GM18951 (cell line): ENCODE measurements at regions of chr2 and their contacts with region 1.

Region 1: DNA sequence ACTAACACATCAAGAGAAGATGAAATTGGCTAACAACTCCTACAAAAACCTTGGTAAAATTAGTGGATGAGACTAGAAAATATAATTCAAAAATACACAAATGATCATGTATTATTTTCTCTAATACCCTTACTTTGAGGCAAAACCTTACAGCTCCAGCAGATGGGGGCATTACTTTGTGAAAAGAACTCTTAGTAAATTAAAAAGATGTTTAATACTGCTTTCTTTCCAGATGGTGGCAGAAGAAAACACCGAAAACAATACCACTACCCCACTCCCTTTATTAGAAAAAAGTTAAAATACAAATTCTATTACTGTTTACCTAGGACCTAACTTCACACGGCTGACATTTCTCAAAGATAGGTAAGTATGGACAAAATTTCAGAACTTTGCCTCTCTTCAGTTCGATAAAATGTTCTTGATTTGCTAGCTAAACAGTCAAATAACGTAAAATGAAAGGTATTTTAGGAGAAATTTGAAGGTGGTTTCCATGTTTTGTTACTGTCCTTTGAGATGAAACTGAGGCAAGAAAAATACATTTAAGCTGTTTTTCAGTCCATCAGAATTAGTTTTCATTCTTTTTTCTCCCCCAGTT is 30.6 kb downstream of the ORC4 start:
- POLR2A ChIP-seq: no peak

Region 2: DNA sequence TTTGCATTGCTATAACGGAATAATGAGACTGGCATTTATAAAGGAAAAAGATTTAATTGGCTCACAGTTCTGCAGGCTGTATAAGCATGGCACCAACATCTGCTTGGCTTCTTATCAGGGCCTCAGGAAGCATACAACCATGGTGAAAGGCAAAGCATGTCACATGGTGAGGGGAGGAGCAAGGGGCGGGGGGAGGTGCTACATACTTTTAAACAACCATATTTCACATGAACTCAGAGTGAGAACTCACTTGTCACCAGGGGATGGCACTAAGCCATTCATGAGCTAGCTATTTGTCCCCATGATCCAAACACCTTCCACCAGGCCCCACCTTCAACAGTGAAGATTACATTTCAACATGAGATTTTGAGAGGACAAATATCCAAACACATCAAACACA is 219.7 kb after region 1 on chr2:
- in situ Hi-C with region 1: no loop called
- POLR2A ChIP-seq: no peak

Region 3: GRCh38 chr2:148519013-148519412 is 529.1 kb after region 1 on chr2:
- in situ Hi-C with region 1: loop called (anchors 10 kb)
- POLR2A ChIP-seq: no peak

Region 4: DNA sequence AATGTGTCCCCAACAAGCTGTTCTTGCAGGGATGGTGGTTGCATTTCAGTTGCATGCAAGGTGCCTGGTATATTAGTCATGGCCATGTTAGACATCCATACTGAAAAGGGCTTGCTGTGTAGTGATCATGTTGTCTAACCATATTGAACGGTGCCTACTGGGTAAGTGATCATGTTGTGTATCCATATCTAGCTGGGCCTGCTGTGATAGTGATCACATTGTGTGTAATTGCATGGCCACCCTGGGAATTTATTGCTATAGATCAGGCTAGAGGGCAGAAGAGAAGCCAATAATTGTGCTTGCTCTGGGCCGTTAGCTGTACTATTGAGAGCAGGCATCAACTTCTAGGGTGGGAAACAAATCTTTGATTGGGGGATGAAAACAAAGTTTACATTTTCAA is 644.8 kb after region 1 on chr2:
- in situ Hi-C with region 1: loop called (anchors 10 kb)
- POLR2A ChIP-seq: no peak

Region 5: GRCh38 chr2:148860037-148860436 is 870.1 kb after region 1 on chr2:
- in situ Hi-C with region 1: no loop called
- POLR2A ChIP-seq: no peak

Region 6: GRCh38 chr2:148989882-148990493 is 1000.1 kb after region 1 on chr2:
- in situ Hi-C with region 1: loop called (anchors 25 kb)
- POLR2A ChIP-seq: no peak